ENCODE measurements at regions of chr6 and their contacts with region 1.

Region 1: DNA sequence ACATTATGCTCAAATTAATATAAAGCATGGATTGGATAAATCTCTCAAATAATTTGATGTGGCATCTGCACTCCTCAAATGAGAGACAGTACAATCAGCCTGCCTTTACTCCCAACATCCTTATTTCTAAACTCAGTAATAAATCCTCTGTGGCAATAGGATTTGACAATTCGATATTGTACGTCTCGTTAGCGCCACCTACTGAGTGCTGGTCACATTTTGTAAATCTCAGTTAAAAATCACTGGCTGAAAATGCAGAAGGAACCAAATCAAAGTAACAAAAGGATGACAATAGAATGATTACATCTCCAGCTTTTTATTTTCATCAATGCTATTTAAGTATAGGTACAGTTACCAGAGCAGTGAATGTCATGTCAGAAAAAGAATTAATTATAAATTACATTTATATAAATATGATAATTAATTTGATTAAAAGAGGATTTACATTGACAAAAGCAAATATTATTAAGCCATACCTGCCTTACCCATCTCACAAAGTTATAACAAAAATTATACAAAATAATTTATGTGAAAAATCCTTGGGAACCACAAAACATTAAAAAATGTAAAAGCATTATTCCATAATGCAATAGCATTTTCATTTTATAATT is 20.2 kb upstream of the GJE1 start:
- DNase-seq: peak; percentile 30 to 68 (median 55)
- ATAC-seq: no peak
- H3K4me3 ChIP-seq: no peak overlapping the region
- H3K27ac ChIP-seq: no peak overlapping the region
- H3K4me1 ChIP-seq: no peaks in the 10 kb centered on the region
- H3K27me3 ChIP-seq: no peaks in the 10 kb centered on the region
- CTCF ChIP-seq: peak; percentile 53 to 78 (median 70)
- POLR2A ChIP-seq: no peak

Region 2: GRCh38 chr6:141677598-141678211 is 434.9 kb before region 1 on chr6:
- intact Hi-C with region 1: loop called in 7 of 10 experiments (anchors 2 to 10 kb)
- DNase-seq: no peak
- ATAC-seq: no peak
- H3K4me3 ChIP-seq: no peak overlapping the region
- H3K27ac ChIP-seq: no peak overlapping the region
- H3K4me1 ChIP-seq: peaks cover 0 to 4% (median 0%) of the 10 kb centered on the region in 12 donors
- H3K27me3 ChIP-seq: no peaks in the 10 kb centered on the region
- CTCF ChIP-seq: peak; percentile 32 to 63 (median 50)
- POLR2A ChIP-seq: no peak

Region 3: DNA sequence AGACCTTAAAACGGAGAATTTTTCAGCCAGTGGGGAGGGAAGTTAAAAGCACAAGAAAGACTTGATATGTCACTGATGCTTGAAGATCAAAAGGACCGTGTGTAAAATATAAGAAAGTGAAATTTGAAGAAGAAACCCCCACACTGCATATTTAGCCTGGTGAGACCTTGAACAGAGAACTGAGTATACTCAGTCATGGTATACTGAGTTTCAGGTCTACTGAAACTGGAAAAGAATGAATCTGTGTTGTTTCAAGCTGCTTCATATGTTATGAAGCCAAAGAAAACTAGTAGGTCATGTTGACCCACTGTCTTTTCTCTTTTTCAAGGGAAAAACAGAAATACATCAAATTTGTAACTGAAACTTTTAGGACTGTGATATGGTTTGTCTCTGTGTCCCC is 423.6 kb before region 1 on chr6:
- intact Hi-C with region 1: loop called in 2 of 10 experiments (anchors 10 kb)
- DNase-seq: no peak
- ATAC-seq: no peak
- H3K4me3 ChIP-seq: no peak overlapping the region
- H3K27ac ChIP-seq: no peak overlapping the region
- H3K4me1 ChIP-seq: no peaks in the 10 kb centered on the region
- H3K27me3 ChIP-seq: no peaks in the 10 kb centered on the region
- CTCF ChIP-seq: no peak
- POLR2A ChIP-seq: no peak

Region 4: GRCh38 chr6:141988954-141989705 is 123.4 kb before region 1 on chr6:
- intact Hi-C with region 1: loop called in 1 of 10 experiments (anchors 10 kb)
- DNase-seq: no peak
- ATAC-seq: no peak
- H3K4me3 ChIP-seq: no peak overlapping the region
- H3K27ac ChIP-seq: no peak overlapping the region
- H3K4me1 ChIP-seq: no peaks in the 10 kb centered on the region
- H3K27me3 ChIP-seq: peaks cover 0 to 6% (median 0%) of the 10 kb centered on the region in 9 donors
- CTCF ChIP-seq: peak in 9 of 12 donors; percentile 16 to 50 (median 42)
- POLR2A ChIP-seq: no peak